GM10248 (cell line): ENCODE measurements at regions of chr10 and their contacts with region 1.

Region 1: DNA sequence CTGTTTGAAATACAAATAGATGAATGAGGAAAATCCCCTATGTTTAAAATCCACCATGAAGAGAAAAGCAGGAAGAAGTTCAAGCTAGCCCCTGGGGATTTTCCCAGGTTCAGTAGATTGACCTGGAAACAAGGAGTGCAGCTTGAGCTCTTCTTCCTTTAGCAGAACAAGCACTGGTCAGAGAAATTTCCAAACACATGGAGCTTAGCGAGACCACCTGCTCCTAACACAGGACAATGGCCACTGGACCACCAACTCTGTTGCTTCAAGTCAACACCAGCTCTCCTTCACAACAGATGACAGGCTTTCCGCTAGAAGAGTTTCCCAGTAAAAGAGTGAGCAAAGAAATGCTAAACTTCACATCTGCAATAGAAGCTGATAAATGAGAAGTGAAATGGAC is 9.4 kb upstream of the FBXW4 start:
- DNase-seq: no peak
- CTCF ChIP-seq: no peak

Region 2: GRCh38 chr10:101716851-101717659 is 12.7 kb after region 1 on chr10:
- CTCF ChIA-PET with region 1: interaction called, 12 read pairs
- POLR2A ChIA-PET with region 1: no interaction called
- DNase-seq: no peak
- CTCF ChIP-seq: no peak

Region 3: GRCh38 chr10:101745074-101745696 is 40.9 kb after region 1 on chr10:
- CTCF ChIA-PET with region 1: no interaction called
- POLR2A ChIA-PET with region 1: no interaction called
- DNase-seq: no peak
- CTCF ChIP-seq: no peak